Heart right ventricle (tissue), 16 donors: ENCODE measurements at regions of chr2 and their contacts with region 1.

Region 1: GRCh38 chr2:173075781-173076580 is at the start of gene MAP3K20:
- DNase-seq: peak; percentile 80 to 82
- ATAC-seq: peak; percentile 77 to 90 (median 86)
- H3K4me3 ChIP-seq: peak within 1 kb of the TSS; percentile 62 to 91 (median 83)
- H3K27ac ChIP-seq: peak within 1 kb of the TSS; percentile 96 to 98 (median 97)
- H3K4me1 ChIP-seq: peaks cover 0 to 57% (median 28%) of the 10 kb centered on the region in 9 donors
- H3K27me3 ChIP-seq: no peaks in the 10 kb centered on the region
- CTCF ChIP-seq: peak in 8 of 9 donors; percentile 2 to 77 (median 54)
- total RNA-seq, gene MAP3K20: 357 to 560 (median 437) TPM

Region 2: GRCh38 chr2:173037245-173038120 is 38.5 kb before region 1 on chr2:
- intact Hi-C with region 1: loop called in 4 of 10 experiments (anchors 5 to 10 kb)
- DNase-seq: peak in 1 of 2 donors; percentile 15
- ATAC-seq: peak; percentile 60 to 90 (median 78)
- H3K4me3 ChIP-seq: no peak overlapping the region
- H3K27ac ChIP-seq: peak overlapping the region; percentile 6 to 80 (median 55)
- H3K4me1 ChIP-seq: peaks cover 0 to 42% (median 22%) of the 10 kb centered on the region in 9 donors
- H3K27me3 ChIP-seq: no peaks in the 10 kb centered on the region
- CTCF ChIP-seq: no peak

Region 3: DNA sequence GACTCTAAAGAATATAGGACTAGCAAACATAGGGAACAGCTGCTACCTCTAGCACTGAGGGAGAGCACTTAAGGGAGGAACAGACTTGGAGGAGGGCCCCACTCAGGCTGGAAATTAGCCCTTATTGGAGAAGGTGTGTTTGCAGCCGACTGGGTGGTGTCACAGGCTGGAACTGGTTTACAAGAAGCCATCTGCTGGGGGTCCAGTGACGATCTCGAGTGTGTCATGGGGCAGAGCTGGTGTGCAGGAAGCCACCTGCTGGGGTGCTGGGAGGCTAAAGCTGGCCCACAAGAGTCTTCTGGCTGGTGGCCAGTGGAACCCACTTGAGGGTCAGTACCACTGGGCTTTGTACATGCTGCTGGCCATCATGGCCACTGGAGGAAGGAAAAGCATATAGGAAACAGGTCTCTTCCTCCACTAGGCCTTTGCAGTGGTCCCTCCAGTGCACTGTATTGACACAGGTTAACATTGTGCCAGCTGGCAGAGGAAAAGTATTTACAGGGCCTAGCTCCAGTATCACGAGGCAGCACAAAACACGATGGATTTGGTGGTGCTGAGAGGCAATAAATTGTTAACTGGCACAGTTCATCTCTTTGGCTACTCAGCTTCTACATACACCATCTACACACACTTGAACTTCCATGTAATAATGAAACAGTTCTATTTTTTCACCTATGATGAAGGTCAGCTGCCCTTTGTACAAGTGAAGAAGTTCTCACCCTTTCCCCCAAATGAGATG is 43.3 kb after region 1 on chr2:
- intact Hi-C with region 1: no loop called
- DNase-seq: peak in 1 of 2 donors; percentile 41
- ATAC-seq: peak; percentile 56 to 83 (median 72)
- H3K4me3 ChIP-seq: no peak overlapping the region
- H3K27ac ChIP-seq: peak overlapping the region in 8 of 10 donors; percentile 10 to 74 (median 55)
- H3K4me1 ChIP-seq: peaks cover 2 to 57% (median 30%) of the 10 kb centered on the region in 9 donors
- H3K27me3 ChIP-seq: peaks cover 0 to 8% (median 0%) of the 10 kb centered on the region in 7 donors
- CTCF ChIP-seq: no peak

Region 4: DNA sequence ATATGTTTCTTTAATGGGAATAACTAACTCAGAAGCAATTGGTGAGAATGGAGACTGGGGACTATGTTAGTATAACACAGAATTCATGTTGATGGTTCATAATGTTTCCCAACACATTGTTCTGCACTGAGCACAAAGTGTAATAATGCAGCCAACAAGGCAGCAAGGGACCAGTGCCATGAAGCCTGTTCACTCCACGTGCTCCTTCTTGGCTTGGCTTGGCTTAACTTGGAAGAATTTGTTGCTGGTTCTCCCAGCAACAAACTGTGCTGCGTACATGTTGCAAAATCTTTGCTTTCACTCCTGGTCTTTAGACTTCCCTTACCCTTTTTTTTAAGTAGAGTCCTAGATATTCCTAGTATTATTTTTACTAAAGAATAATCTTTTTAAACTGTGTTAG is 129.4 kb after region 1 on chr2:
- intact Hi-C with region 1: loop called in 7 of 10 experiments (anchors 1 to 10 kb)
- DNase-seq: peak; percentile 46 to 84
- ATAC-seq: peak; percentile 87 to 98 (median 94)
- H3K4me3 ChIP-seq: no peak overlapping the region
- H3K27ac ChIP-seq: peak overlapping the region; percentile 45 to 83 (median 71)
- H3K4me1 ChIP-seq: peaks cover 9 to 72% (median 53%) of the 10 kb centered on the region in 9 donors
- H3K27me3 ChIP-seq: no peaks in the 10 kb centered on the region
- CTCF ChIP-seq: no peak

Region 5: GRCh38 chr2:173210270-173211196 is 134.6 kb after region 1 on chr2:
- intact Hi-C with region 1: loop called in 7 of 10 experiments (anchors 1 to 10 kb)
- DNase-seq: peak; percentile 20 to 87
- ATAC-seq: peak; percentile 87 to 94 (median 92)
- H3K4me3 ChIP-seq: no peak overlapping the region
- H3K27ac ChIP-seq: peak overlapping the region; percentile 8 to 83 (median 59)
- H3K4me1 ChIP-seq: peaks cover 9 to 60% (median 35%) of the 10 kb centered on the region in 9 donors
- H3K27me3 ChIP-seq: no peaks in the 10 kb centered on the region
- CTCF ChIP-seq: peak; percentile 69 to 97 (median 89)

Region 6: GRCh38 chr2:173462892-173463840 is 387.2 kb after region 1 on chr2:
- intact Hi-C with region 1: no loop called
- DNase-seq: no peak
- ATAC-seq: no peak
- H3K4me3 ChIP-seq: no peak overlapping the region
- H3K27ac ChIP-seq: no peak overlapping the region
- H3K4me1 ChIP-seq: no peaks in the 10 kb centered on the region
- H3K27me3 ChIP-seq: peaks cover 0 to 18% (median 8%) of the 10 kb centered on the region in 7 donors
- CTCF ChIP-seq: no peak